ENCODE measurements at regions of chr22 and their contacts with region 1.

Region 1: DNA sequence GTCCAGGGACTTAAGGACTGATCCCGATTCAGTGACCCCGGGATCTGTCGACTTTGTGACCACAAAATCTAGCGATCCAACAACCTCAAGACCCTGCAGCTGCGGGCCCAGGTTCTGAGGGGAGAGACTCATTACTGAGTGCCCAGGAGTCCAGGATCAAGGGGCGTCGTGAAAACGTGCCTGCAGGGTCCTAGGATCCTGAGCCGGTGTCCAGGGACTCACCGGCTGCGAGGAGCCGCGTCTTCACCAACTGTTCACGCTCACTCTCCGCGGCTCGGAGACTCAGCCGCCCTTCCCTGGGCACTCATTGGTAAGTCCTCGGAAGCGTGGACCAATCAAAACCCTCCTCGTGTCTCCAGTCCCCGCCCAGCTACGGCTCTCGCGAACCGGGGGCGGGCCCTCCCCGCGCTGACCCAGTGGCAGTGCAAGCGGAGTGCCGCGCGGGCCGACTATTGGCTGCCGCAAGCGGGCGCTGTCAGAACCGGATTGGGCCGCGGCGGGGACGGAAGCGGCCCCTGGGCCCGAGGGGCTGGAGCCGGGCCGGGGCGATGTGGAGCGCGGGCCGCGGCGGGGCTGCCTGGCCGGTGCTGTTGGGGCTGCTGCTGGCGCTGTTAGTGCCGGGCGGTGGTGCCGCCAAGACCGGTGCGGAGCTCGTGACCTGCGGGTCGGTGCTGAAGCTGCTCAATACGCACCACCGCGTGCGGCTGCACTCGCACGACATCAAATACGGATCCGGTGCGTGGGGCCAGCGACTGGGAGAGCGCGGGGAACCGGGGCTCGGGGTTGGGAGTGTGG is at the start of gene SDF2L1:
- DNase-seq: peak; percentile 93 to 99 (median 98)
- ATAC-seq: peak; percentile 98
- H3K4me3 ChIP-seq: peak within 1 kb of the TSS; percentile 67
- H3K4me3 Mint-ChIP-seq: peak within 1 kb of the TSS; percentile 80 to 91 (median 86)
- H3K27ac ChIP-seq: peak within 1 kb of the TSS; percentile 83
- H3K27ac Mint-ChIP-seq: peak within 1 kb of the TSS; percentile 53 to 98 (median 88)
- H3K4me1 ChIP-seq: peaks cover 18 to 20% of the 10 kb centered on the region in 2 donors
- H3K4me1 Mint-ChIP-seq: peaks cover 24 to 34% (median 32%) of the 10 kb centered on the region in 7 donors
- H3K27me3 ChIP-seq: no peaks in the 10 kb centered on the region
- H3K27me3 Mint-ChIP-seq: no peaks in the 10 kb centered on the region
- total RNA-seq, gene SDF2L1: 22.1 to 99.8 (median 31.7) TPM

Region 2: DNA sequence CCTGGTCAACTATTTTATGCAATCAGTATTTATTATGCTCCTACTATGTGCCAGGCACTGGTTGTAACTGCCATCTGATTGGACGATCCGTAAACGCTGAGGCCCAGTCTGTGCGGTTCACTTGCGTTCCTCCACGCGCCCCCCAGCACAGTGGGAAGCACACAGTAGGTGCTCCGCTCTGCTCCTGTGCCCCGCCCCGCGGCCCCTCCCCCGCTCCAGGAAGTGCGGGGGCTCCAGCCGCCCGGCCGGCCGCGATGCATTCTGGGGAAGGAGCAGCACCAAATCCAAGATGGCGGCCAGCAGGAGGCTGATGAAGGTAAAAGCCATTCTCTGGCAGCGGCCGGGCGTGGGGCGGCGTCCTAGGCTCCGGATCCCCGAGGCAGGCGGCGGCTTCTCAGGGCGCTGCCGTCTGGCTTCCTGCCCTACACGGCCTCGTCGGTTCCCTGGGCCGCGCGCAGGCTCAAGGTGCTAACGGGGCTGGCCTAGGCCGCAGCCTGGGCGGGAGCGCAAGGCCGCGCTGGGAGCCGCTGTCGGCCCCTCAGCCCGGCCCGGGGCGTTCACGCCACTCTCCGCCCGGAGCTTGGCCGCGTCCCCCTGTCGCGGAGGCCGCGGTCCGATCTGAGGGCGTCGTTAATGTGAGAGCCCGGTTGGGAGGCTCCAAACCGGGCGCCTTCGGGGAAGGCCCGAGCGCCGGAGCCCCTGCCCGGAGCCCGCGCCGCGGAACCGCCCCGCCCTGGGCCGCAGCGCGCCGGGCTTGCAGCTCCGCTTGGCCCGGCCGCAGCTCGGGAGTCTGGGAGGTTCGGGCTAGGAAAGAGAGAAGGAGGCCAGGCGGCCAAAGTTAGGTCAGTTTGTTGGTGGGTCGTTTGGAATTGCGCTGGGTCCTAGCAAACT is 74.3 kb before region 1 on chr22 and contains the start of gene UBE2L3:
- CTCF ChIA-PET with region 1: interaction called, 3 read pairs
- POLR2A ChIA-PET with region 1: interaction called, 4 read pairs
- intact Hi-C with region 1: loop called in 1 of 2 experiments (anchors 1 kb)
- DNase-seq: peak; percentile 74 to 88 (median 83)
- ATAC-seq: peak; percentile 95
- H3K4me3 ChIP-seq: peak within 1 kb of the TSS; percentile 72
- H3K4me3 Mint-ChIP-seq: peak within 1 kb of the TSS; percentile 81 to 93 (median 90)
- H3K27ac ChIP-seq: peak within 1 kb of the TSS; percentile 95
- H3K27ac Mint-ChIP-seq: peak within 1 kb of the TSS; percentile 73 to 97 (median 90)
- H3K4me1 ChIP-seq: peaks cover 39 to 40% of the 10 kb centered on the region in 2 donors
- H3K4me1 Mint-ChIP-seq: peaks cover 35 to 56% (median 42%) of the 10 kb centered on the region in 7 donors
- H3K27me3 ChIP-seq: no peaks in the 10 kb centered on the region
- H3K27me3 Mint-ChIP-seq: no peaks in the 10 kb centered on the region
- total RNA-seq, gene UBE2L3: 22.5 to 55.0 (median 34.2) TPM

Region 3: GRCh38 chr22:21624120-21624879 is 17.7 kb before region 1 on chr22:
- CTCF ChIA-PET with region 1: interaction called, 30 read pairs
- POLR2A ChIA-PET with region 1: interaction called, 93 read pairs
- intact Hi-C with region 1: loop called (anchors 1 to 2 kb)
- DNase-seq: peak in 6 of 9 donors; percentile 23 to 48 (median 26)
- ATAC-seq: peak; percentile 40
- H3K4me3 ChIP-seq: no peak overlapping the region
- H3K4me3 Mint-ChIP-seq: no peak overlapping the region
- H3K27ac ChIP-seq: no peak overlapping the region
- H3K27ac Mint-ChIP-seq: peak overlapping the region in 8 of 9 donors; percentile 9 to 85 (median 64)
- H3K4me1 ChIP-seq: peaks cover 6 to 26% of the 10 kb centered on the region in 2 donors
- H3K4me1 Mint-ChIP-seq: peaks cover 28 to 57% (median 44%) of the 10 kb centered on the region in 7 donors
- H3K27me3 ChIP-seq: no peaks in the 10 kb centered on the region
- H3K27me3 Mint-ChIP-seq: no peaks in the 10 kb centered on the region

Region 4: GRCh38 chr22:21652010-21652546 is 10.1 kb after region 1 on chr22:
- CTCF ChIA-PET with region 1: interaction called, 9 read pairs
- POLR2A ChIA-PET with region 1: interaction called, 23 read pairs
- intact Hi-C with region 1: loop called (anchors 1 kb)
- DNase-seq: peak; percentile 60 to 90 (median 77)
- ATAC-seq: peak; percentile 98
- H3K4me3 ChIP-seq: peak overlapping the region; percentile 63
- H3K4me3 Mint-ChIP-seq: peak overlapping the region; percentile 82 to 89 (median 88)
- H3K27ac ChIP-seq: peak overlapping the region; percentile 45
- H3K27ac Mint-ChIP-seq: peak overlapping the region in 3 of 9 donors; percentile 8 to 85 (median 59)
- H3K4me1 ChIP-seq: peaks cover 9 to 20% of the 10 kb centered on the region in 2 donors
- H3K4me1 Mint-ChIP-seq: peaks cover 16 to 38% (median 30%) of the 10 kb centered on the region in 7 donors
- H3K27me3 ChIP-seq: no peaks in the 10 kb centered on the region
- H3K27me3 Mint-ChIP-seq: no peaks in the 10 kb centered on the region

Region 5: GRCh38 chr22:21666786-21667185 is 24.8 kb after region 1 on chr22:
- CTCF ChIA-PET with region 1: interaction called, 6 read pairs
- POLR2A ChIA-PET with region 1: interaction called, 20 read pairs
- intact Hi-C with region 1: loop called in 1 of 2 experiments (anchors 1 kb)
- DNase-seq: no peak
- ATAC-seq: no peak
- H3K4me3 ChIP-seq: peak overlapping the region; percentile 99
- H3K4me3 Mint-ChIP-seq: peak overlapping the region; percentile 95 to 100 (median 98)
- H3K27ac ChIP-seq: peak overlapping the region; percentile 86
- H3K27ac Mint-ChIP-seq: peak overlapping the region; percentile 79 to 99 (median 97)
- H3K4me1 ChIP-seq: peaks cover 6 to 16% of the 10 kb centered on the region in 2 donors
- H3K4me1 Mint-ChIP-seq: peaks cover 29 to 45% (median 42%) of the 10 kb centered on the region in 7 donors
- H3K27me3 ChIP-seq: no peaks in the 10 kb centered on the region
- H3K27me3 Mint-ChIP-seq: peaks cover 0 to 2% (median 0%) of the 10 kb centered on the region in 5 donors

Region 6: DNA sequence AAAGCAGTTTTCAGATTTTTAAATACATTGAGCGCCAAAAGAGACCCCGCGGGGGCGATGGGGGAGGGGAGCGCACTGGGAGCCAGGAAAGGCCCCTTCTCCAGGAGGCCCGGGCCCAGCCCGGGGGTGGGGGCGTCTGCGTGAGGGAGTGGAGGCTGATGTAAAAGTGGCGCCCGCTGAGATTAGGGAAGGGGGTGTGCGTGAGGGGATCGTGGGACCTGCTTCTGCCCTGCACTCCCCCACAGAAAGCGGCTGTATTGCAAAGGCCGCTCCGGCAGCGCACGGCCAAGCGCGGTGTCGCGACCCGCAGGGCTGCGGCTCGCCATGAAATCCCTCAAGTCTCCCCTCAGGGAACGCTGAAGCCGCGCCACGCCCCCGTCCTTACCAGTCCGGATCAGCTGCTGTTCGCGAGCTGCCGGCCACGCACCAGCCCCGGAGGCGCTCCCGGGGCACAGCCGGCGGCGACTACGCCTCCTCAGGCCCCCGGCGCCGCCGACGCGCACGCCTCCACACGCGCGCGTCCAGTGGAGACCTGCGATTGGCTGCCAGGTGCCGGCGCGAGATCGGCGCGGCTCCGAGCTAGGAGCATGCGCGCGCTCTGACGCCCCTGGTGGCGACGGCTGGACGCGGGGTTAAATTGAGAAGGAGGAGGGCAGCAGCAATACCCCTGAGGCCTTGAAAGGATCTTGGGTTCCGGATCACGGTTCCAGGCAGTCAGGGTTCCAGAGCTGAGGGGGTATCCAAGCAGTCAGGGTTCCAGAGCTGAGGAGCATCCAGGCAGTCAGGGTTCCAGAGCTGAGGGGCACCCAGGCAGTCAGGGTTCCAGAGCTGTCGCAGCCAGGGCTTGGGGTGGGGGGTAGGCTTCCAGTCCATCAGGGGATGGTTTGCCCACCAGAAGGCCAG is 866.5 kb after region 1 on chr22 and contains the start of gene ZNF280B:
- CTCF ChIA-PET with region 1: no interaction called
- POLR2A ChIA-PET with region 1: no interaction called
- intact Hi-C with region 1: no loop called
- DNase-seq: peak; percentile 70 to 82 (median 79)
- ATAC-seq: peak; percentile 99
- H3K4me3 ChIP-seq: peak within 1 kb of the TSS; percentile 61
- H3K4me3 Mint-ChIP-seq: peak within 1 kb of the TSS; percentile 74 to 91 (median 84)
- H3K27ac ChIP-seq: peak within 1 kb of the TSS; percentile 67
- H3K27ac Mint-ChIP-seq: peak within 1 kb of the TSS in 8 of 9 donors; percentile 30 to 82 (median 66)
- H3K4me1 ChIP-seq: peaks cover 0 to 15% of the 10 kb centered on the region in 2 donors
- H3K4me1 Mint-ChIP-seq: peaks cover 9 to 36% (median 25%) of the 10 kb centered on the region in 7 donors
- H3K27me3 ChIP-seq: no peaks in the 10 kb centered on the region
- H3K27me3 Mint-ChIP-seq: peaks cover 0 to 17% (median 5%) of the 10 kb centered on the region in 5 donors
- total RNA-seq, gene ZNF280B: 2.1 to 3.6 (median 2.2) TPM

Measured in naive thymus-derived CD4-positive, alpha-beta T cell (primary cell).